ENCODE measurements at regions of chr4 and their contacts with region 1.

Region 1: GRCh38 chr4:118850488-118851173 is 14.7 kb upstream of the SEC24D start:
- DNase-seq: peak in 7 of 9 donors; percentile 49 to 65 (median 59)
- ATAC-seq: peak; percentile 93
- H3K4me3 ChIP-seq: peak overlapping the region; percentile 78
- H3K4me3 Mint-ChIP-seq: peak overlapping the region; percentile 86 to 99 (median 93)
- H3K27ac ChIP-seq: peak overlapping the region; percentile 73
- H3K27ac Mint-ChIP-seq: peak overlapping the region; percentile 92 to 99 (median 96)
- H3K4me1 ChIP-seq: peaks cover 0 to 9% of the 10 kb centered on the region in 2 donors
- H3K4me1 Mint-ChIP-seq: peaks cover 14 to 37% (median 28%) of the 10 kb centered on the region in 7 donors
- H3K27me3 ChIP-seq: no peaks in the 10 kb centered on the region
- H3K27me3 Mint-ChIP-seq: peaks cover 0 to 20% (median 3%) of the 10 kb centered on the region in 5 donors

Region 2: GRCh38 chr4:117491516-117491915 is 1359.1 kb before region 1 on chr4:
- CTCF ChIA-PET with region 1: no interaction called
- POLR2A ChIA-PET with region 1: no interaction called
- intact Hi-C with region 1: no loop called
- DNase-seq: no peak
- ATAC-seq: no peak
- H3K4me3 ChIP-seq: no peak overlapping the region
- H3K4me3 Mint-ChIP-seq: no peak overlapping the region
- H3K27ac ChIP-seq: no peak overlapping the region
- H3K27ac Mint-ChIP-seq: no peak overlapping the region
- H3K4me1 ChIP-seq: no peaks in the 10 kb centered on the region
- H3K4me1 Mint-ChIP-seq: no peaks in the 10 kb centered on the region
- H3K27me3 ChIP-seq: no peaks in the 10 kb centered on the region
- H3K27me3 Mint-ChIP-seq: no peaks in the 10 kb centered on the region

Region 3: GRCh38 chr4:118586357-118586790 is 264.3 kb before region 1 on chr4:
- CTCF ChIA-PET with region 1: no interaction called
- POLR2A ChIA-PET with region 1: no interaction called
- intact Hi-C with region 1: loop called (anchors 1 to 5 kb)
- DNase-seq: no peak
- ATAC-seq: no peak
- H3K4me3 ChIP-seq: no peak overlapping the region
- H3K4me3 Mint-ChIP-seq: no peak overlapping the region
- H3K27ac ChIP-seq: no peak overlapping the region
- H3K27ac Mint-ChIP-seq: no peak overlapping the region
- H3K4me1 ChIP-seq: peaks cover 4 to 6% of the 10 kb centered on the region in 2 donors
- H3K4me1 Mint-ChIP-seq: peaks cover 6 to 19% (median 17%) of the 10 kb centered on the region in 7 donors
- H3K27me3 ChIP-seq: no peaks in the 10 kb centered on the region
- H3K27me3 Mint-ChIP-seq: peaks cover 2 to 37% (median 16%) of the 10 kb centered on the region in 5 donors

Region 4: DNA sequence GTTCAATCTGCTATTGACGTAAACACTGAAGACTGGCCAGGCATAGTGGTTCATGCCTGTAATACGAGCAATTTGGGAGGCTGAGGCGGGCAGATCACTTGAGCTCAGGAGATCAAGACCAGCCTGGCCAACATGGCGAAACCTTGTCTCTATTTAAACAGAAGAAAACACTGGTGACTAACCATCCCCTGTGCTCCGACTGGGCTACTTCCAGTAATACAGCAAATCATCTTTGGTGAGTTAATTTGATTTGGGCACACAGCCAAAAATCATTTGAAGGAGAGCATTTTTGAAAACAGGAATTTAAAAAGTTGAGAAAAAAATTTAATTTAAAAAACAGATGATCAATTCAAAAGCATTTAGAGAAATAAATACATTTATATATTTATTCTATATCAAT is 66.7 kb before region 1 on chr4:
- CTCF ChIA-PET with region 1: no interaction called
- POLR2A ChIA-PET with region 1: no interaction called
- intact Hi-C with region 1: no loop called
- DNase-seq: no peak
- ATAC-seq: no peak
- H3K4me3 ChIP-seq: no peak overlapping the region
- H3K4me3 Mint-ChIP-seq: no peak overlapping the region
- H3K27ac ChIP-seq: no peak overlapping the region
- H3K27ac Mint-ChIP-seq: no peak overlapping the region
- H3K4me1 ChIP-seq: no peaks in the 10 kb centered on the region
- H3K4me1 Mint-ChIP-seq: peaks cover 0 to 2% (median 0%) of the 10 kb centered on the region in 7 donors
- H3K27me3 ChIP-seq: no peaks in the 10 kb centered on the region
- H3K27me3 Mint-ChIP-seq: no peaks in the 10 kb centered on the region

Region 5: GRCh38 chr4:118801899-118802575 is 48.6 kb before region 1 on chr4:
- CTCF ChIA-PET with region 1: no interaction called
- POLR2A ChIA-PET with region 1: no interaction called
- intact Hi-C with region 1: no loop called
- DNase-seq: no peak
- ATAC-seq: no peak
- H3K4me3 ChIP-seq: no peak overlapping the region
- H3K4me3 Mint-ChIP-seq: no peak overlapping the region
- H3K27ac ChIP-seq: no peak overlapping the region
- H3K27ac Mint-ChIP-seq: peak overlapping the region in 1 of 9 donors; percentile 17
- H3K4me1 ChIP-seq: no peaks in the 10 kb centered on the region
- H3K4me1 Mint-ChIP-seq: no peaks in the 10 kb centered on the region
- H3K27me3 ChIP-seq: no peaks in the 10 kb centered on the region
- H3K27me3 Mint-ChIP-seq: no peaks in the 10 kb centered on the region